ENCODE measurements at regions of chr7 and their contacts with region 1.

Region 1: GRCh38 chr7:85014936-85015660 is 171.8 kb downstream of the SEMA3D start:
- DNase-seq: peak in 2 of 4 experiments; percentile 12 to 38
- ATAC-seq: peak; percentile 82
- H3K4me3 ChIP-seq: no peak overlapping the region
- H3K27ac ChIP-seq: no peak overlapping the region
- H3K4me1 ChIP-seq: no peaks in the 10 kb centered on the region
- H3K27me3 ChIP-seq: no peaks in the 10 kb centered on the region
- CTCF ChIP-seq: peak in 2 of 3 experiments; percentile 24 to 36; a peak in 2 of 6 replicates
- EP300 ChIP-seq: no peak
- POLR2A ChIP-seq: no peak
- RAD21 ChIP-seq: peak in 1 of 2 experiments; percentile 31; a peak in 1 of 4 replicates

Region 2: GRCh38 chr7:84490661-84491060 is 524.4 kb before region 1 on chr7:
- CTCF ChIA-PET with region 1: interaction called, 3 read pairs
- POLR2A ChIA-PET with region 1: no interaction called
- in situ Hi-C with region 1: loop called (anchors 10 kb)
- intact Hi-C with region 1: no loop called
- DNase-seq: peak in 3 of 4 experiments; percentile 12 to 20 (median 14)
- ATAC-seq: peak; percentile 71; the same call in 2 of the 3 replicates
- H3K4me3 ChIP-seq: no peak overlapping the region
- H3K27ac ChIP-seq: no peak overlapping the region
- H3K4me1 ChIP-seq: no peaks in the 10 kb centered on the region
- H3K27me3 ChIP-seq: no peaks in the 10 kb centered on the region
- CTCF ChIP-seq: peak in 2 of 3 experiments; percentile 10 to 45; a peak in 4 of 6 replicates
- EP300 ChIP-seq: no peak
- POLR2A ChIP-seq: no peak
- RAD21 ChIP-seq: peak; percentile 74 to 78

Measured in K562 (cell line).